HCT116 (cell line): ENCODE measurements at regions of chr2 and their contacts with region 1.

Region 1: GRCh38 chr2:75340560-75341330 is 141.4 kb upstream of the TACR1 start:
- DNase-seq: no peak
- ATAC-seq: no peak
- H3K4me3 ChIP-seq: no peak overlapping the region
- H3K27ac ChIP-seq: no peak overlapping the region
- H3K4me1 ChIP-seq: no peaks in the 10 kb centered on the region
- H3K27me3 ChIP-seq: peaks cover 43% of the 10 kb centered on the region
- CTCF ChIP-seq: no peak
- POLR2A ChIP-seq: no peak
- RAD21 ChIP-seq: no peak

Region 2: DNA sequence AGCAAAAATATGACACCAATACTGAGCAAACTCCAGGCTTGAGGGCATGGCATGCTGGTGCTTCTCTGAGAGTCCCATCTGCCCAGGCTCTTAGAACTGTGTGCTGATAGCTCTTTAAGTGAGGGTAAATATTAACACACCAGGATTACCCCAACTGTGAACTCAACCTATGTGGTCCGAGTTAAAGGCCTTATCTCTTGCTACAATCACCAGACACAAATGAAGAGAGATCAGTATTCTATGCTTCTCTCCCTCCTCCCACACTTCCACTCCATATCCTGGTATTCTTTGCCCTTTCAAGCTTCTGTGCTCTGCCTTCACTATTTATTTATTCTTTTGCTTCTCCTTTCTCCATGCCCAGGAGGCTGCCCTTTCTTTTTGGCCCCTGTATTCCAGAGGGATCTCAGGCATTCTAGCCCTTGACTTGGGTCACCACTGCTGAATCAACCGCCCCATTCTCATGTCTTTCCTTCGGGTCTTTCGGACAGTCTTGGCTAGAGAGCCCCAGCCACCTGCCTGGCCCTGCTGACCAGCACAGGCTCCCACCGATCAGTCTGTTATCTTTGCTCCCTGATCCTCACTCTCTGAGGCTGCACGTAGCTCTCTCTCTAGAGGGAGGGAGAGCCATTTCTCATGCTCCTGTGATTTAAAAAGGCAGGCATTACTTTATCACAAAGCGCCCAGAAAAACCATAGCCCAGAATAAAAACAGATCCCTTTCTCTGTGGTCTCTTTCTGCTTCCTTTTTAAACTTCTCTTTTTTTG is 524.0 kb before region 1 on chr2:
- CTCF ChIA-PET with region 1: no interaction called
- POLR2A ChIA-PET with region 1: no interaction called
- RAD21 ChIA-PET with region 1: no interaction called
- intact Hi-C with region 1: loop called (anchors 5 kb)
- DNase-seq: no peak
- ATAC-seq: no peak
- H3K4me3 ChIP-seq: no peak overlapping the region
- H3K27ac ChIP-seq: no peak overlapping the region
- H3K4me1 ChIP-seq: no peaks in the 10 kb centered on the region
- H3K27me3 ChIP-seq: no peaks in the 10 kb centered on the region
- CTCF ChIP-seq: no peak
- POLR2A ChIP-seq: no peak
- RAD21 ChIP-seq: no peak

Region 3: GRCh38 chr2:75098856-75099255 is 241.9 kb before region 1 on chr2:
- CTCF ChIA-PET with region 1: no interaction called
- POLR2A ChIA-PET with region 1: no interaction called
- RAD21 ChIA-PET with region 1: no interaction called
- intact Hi-C with region 1: no loop called
- DNase-seq: no peak
- ATAC-seq: peak; percentile 72
- H3K4me3 ChIP-seq: no peak overlapping the region
- H3K27ac ChIP-seq: no peak overlapping the region
- H3K4me1 ChIP-seq: peaks cover 2 to 16% of the 10 kb centered on the region in 2 experiments; a peak in 2 of 4 replicates
- H3K27me3 ChIP-seq: peaks cover 37% of the 10 kb centered on the region
- CTCF ChIP-seq: peak; percentile 16 to 56 (median 52); a peak in 4 of 6 replicates
- POLR2A ChIP-seq: no peak
- RAD21 ChIP-seq: peak; percentile 29; the same call in 1 of the 2 replicates